Calu3 (cell line): ENCODE measurements at regions of chr14 and their contacts with region 1.

Region 1: DNA sequence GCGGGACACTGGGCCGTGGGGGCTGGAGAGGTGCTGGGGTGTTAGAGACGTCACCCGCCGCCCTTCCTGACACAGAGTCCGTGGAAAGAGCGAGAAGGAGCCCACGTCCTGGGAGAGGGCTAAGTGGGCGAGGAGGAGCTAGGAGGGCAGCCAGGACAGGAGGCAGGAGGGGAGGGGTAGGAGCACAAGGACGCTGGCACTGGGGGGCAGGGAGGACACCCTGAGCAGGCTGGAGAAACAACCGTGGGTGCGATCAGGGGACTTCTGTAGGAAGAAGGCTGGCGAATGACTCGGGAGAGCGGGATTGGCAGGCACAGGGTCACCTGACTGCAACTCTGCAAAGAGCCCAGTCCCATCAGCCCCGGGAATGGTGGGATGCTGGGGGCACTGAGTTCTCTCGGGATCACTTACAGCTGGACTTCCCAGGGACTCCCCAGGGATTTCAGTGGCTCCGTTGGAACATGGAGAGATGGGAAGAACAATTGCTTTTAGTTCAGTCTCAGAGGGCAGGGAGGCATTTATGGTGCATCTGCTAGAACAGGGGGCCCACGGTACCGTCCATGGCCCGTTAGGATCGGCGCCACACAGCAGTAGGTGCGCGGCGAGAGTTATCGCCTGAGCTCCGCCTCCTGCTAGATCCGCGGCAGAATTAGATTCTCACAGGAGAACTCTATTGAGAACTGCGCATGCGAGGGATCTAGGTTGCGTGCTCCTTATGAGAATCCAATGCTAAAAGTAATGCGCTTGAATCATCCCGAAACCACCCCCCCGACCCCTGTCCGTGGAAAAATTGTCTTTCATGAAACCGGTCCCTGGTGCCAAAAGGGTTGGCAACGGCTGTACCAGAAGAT is 24.3 kb downstream of the UBR7 start:
- DNase-seq: peak; percentile 45
- H3K4me3 Mint-ChIP-seq: peak overlapping the region; percentile 82
- H3K27ac Mint-ChIP-seq: peak overlapping the region; percentile 37
- H3K4me1 Mint-ChIP-seq: peaks cover 21% of the 10 kb centered on the region
- H3K27me3 Mint-ChIP-seq: no peaks in the 10 kb centered on the region
- CTCF ChIP-seq: no peak

Region 2: GRCh38 chr14:92973261-92973797 is 258.0 kb before region 1 on chr14:
- CTCF ChIA-PET with region 1: no interaction called
- intact Hi-C with region 1: no loop called
- DNase-seq: peak; percentile 71
- H3K4me3 Mint-ChIP-seq: no peak overlapping the region
- H3K27ac Mint-ChIP-seq: no peak overlapping the region
- H3K4me1 Mint-ChIP-seq: no peaks in the 10 kb centered on the region
- H3K27me3 Mint-ChIP-seq: no peaks in the 10 kb centered on the region
- CTCF ChIP-seq: peak; percentile 57

Region 3: DNA sequence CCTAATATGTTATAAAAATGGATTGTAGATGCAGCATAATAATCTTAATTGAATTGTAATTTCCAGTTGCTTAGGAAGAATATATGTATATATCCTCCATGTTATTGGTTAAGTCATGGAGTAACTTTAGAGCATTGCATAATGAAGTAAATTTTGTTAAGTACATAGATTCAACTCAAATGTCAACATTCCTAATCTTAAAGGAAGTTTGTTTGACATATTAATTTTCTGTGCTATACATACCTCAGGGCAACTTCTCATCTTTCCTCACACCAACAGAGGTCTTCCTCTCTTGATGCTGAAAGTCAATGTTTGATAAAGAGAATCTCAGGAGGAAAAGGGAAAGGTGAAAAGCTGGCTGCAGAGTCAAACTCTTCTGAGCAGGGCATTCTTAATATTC is 239.7 kb after region 1 on chr14:
- CTCF ChIA-PET with region 1: no interaction called
- intact Hi-C with region 1: loop called (anchors 10 kb)
- DNase-seq: no peak
- H3K4me3 Mint-ChIP-seq: no peak overlapping the region
- H3K27ac Mint-ChIP-seq: no peak overlapping the region
- H3K4me1 Mint-ChIP-seq: no peaks in the 10 kb centered on the region
- H3K27me3 Mint-ChIP-seq: peaks cover 41% of the 10 kb centered on the region
- CTCF ChIP-seq: no peak

Region 4: GRCh38 chr14:93543766-93544165 is 312.4 kb after region 1 on chr14:
- CTCF ChIA-PET with region 1: no interaction called
- intact Hi-C with region 1: loop called (anchors 2 kb)
- DNase-seq: no peak
- H3K4me3 Mint-ChIP-seq: no peak overlapping the region
- H3K27ac Mint-ChIP-seq: no peak overlapping the region
- H3K4me1 Mint-ChIP-seq: no peaks in the 10 kb centered on the region
- H3K27me3 Mint-ChIP-seq: peaks cover 49% of the 10 kb centered on the region
- CTCF ChIP-seq: no peak

Region 5: DNA sequence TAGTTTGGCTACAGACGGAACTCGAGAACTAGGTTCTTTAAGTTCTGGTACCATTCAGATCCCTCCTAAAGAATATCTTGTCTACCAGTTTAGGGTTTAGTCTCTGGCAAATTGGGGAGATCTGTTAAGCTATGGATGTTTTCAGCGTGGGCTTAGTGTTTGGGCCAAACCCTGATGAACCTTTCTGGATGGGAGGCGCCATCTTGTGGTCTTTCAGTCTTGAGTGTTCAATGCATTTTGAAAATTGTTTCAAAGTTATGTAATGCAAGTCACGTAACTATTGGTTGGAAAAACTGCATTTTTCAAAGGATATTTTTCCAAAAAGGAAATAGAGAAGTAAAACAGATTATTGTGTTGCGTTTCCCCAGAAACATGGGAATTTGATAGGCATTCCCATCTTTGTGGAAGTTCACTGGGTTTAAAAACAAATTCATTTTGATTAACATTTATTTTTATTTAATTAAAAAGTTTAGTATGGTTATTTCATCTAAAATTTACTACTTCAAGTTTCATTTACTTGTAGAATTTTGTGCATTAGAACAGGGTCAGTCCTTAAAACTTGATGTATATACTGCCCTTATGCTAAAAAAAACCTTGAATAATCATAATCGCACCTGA is 387.9 kb after region 1 on chr14:
- CTCF ChIA-PET with region 1: no interaction called
- intact Hi-C with region 1: loop called (anchors 1 kb)
- DNase-seq: peak; percentile 43
- H3K4me3 Mint-ChIP-seq: no peak overlapping the region
- H3K27ac Mint-ChIP-seq: no peak overlapping the region
- H3K4me1 Mint-ChIP-seq: no peaks in the 10 kb centered on the region
- H3K27me3 Mint-ChIP-seq: peaks cover 39% of the 10 kb centered on the region
- CTCF ChIP-seq: peak; percentile 40